Activated B cell treated with CpG ODN at 0.5 μM for 24 hours (primary cell): ENCODE measurements at regions of chr12 and their contacts with region 1.

Region 1: DNA sequence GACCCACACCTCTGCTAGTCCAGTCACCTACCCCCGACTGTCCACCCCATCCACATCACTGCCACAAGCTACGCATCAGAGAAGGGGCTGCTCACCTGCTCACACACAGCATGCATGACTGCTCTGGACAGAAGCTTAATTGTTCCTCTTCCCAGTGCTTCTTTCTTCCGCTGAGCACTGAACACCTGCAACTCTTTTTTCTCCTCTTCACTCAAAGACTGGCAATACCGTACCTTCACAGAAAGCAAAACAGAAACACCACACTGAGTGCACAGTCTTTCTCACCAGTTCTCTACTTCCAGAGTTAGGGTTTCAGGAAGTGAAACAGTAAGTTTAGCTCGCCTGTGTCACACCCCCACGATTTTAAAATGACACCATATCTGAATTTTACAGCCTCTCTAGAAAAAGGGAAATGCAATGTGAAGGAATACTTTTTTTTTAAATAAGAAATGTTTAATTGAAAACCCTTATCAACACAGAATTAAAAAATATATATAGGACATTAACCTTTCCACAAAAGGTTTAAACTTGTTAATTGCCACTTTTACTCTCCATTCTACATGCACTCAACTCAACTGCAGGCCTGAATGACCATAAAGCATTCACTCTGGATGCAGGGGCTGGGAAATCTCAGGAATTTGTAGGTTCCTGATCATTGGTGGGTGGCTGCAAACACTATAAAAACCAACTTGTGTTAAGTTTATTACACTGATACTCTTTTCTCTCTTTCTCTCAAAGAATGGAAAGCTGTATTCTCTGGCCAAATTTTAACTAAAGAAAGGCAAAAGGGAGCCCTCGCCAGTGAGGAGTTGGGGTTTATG is 120.0 kb downstream of the PRICKLE1 start:
- DNase-seq: peak; percentile 37
- ATAC-seq: peak; percentile 94
- H3K4me3 Mint-ChIP-seq: peak overlapping the region; percentile 87
- H3K27ac Mint-ChIP-seq: peak overlapping the region; percentile 97
- H3K4me1 Mint-ChIP-seq: peaks cover 76% of the 10 kb centered on the region
- H3K27me3 Mint-ChIP-seq: no peaks in the 10 kb centered on the region
- CTCF ChIP-seq: no peak

Region 2: GRCh38 chr12:42109031-42109430 is 360.5 kb before region 1 on chr12:
- CTCF ChIA-PET with region 1: no interaction called
- POLR2A ChIA-PET with region 1: no interaction called
- intact Hi-C with region 1: no loop called
- DNase-seq: no peak
- ATAC-seq: no peak
- H3K4me3 Mint-ChIP-seq: no peak overlapping the region
- H3K27ac Mint-ChIP-seq: no peak overlapping the region
- H3K4me1 Mint-ChIP-seq: peaks cover 5% of the 10 kb centered on the region
- H3K27me3 Mint-ChIP-seq: no peaks in the 10 kb centered on the region
- CTCF ChIP-seq: no peak

Region 3: DNA sequence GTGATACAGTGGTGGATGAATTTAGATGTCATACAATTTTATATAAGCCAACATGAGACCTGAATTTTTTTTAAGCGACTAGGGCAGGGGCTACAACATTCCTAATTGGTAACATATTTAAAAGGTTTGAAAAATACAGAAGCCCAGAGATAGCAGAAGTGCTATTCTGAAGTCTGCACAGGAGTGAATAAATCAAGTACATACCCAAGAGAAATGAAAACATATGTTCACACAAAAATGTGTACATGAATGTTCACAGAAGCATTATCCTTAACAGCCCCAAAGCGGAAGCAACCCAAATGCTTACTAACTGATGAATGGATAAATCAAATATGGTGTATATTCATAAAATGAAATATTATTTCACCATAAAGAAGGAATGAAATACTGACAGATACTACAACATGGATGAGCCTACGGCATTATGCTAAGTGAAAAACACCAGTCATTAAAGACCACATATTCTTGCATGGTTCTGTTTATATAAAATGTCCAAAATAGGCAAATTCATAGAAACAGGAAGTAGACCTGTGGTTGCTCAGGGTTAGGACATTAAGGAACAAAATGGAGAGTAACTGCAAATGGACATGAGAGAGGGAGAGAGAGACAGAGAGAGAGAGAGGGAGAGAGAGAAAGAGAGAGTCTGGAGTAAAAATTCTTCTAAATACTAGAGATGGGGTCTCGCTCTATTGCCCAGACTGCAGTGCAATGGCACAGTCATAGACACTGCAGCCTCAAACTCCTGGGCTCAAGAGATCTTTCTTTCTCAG is 296.9 kb before region 1 on chr12:
- CTCF ChIA-PET with region 1: no interaction called
- POLR2A ChIA-PET with region 1: no interaction called
- intact Hi-C with region 1: no loop called
- DNase-seq: no peak
- ATAC-seq: no peak
- H3K4me3 Mint-ChIP-seq: no peak overlapping the region
- H3K27ac Mint-ChIP-seq: peak overlapping the region; percentile 33
- H3K4me1 Mint-ChIP-seq: peaks cover 24% of the 10 kb centered on the region
- H3K27me3 Mint-ChIP-seq: no peaks in the 10 kb centered on the region
- CTCF ChIP-seq: no peak

Region 4: GRCh38 chr12:42325653-42326474 is 143.7 kb before region 1 on chr12 and contains the starts of genes PPHLN1 and ZCRB1:
- CTCF ChIA-PET with region 1: no interaction called
- POLR2A ChIA-PET with region 1: no interaction called
- intact Hi-C with region 1: loop called (anchors 1 kb)
- DNase-seq: peak; percentile 73
- ATAC-seq: peak; percentile 89
- H3K4me3 Mint-ChIP-seq: peak within 1 kb of the TSS; percentile 94
- H3K27ac Mint-ChIP-seq: peak within 1 kb of the TSS; percentile 90
- H3K4me1 Mint-ChIP-seq: peaks cover 51% of the 10 kb centered on the region
- H3K27me3 Mint-ChIP-seq: no peaks in the 10 kb centered on the region
- CTCF ChIP-seq: no peak
- total RNA-seq, gene PPHLN1: 94.0 and 95.9 TPM in 2 replicates
- total RNA-seq, gene ZCRB1: 37.4 and 37.6 TPM in 2 replicates

Region 5: DNA sequence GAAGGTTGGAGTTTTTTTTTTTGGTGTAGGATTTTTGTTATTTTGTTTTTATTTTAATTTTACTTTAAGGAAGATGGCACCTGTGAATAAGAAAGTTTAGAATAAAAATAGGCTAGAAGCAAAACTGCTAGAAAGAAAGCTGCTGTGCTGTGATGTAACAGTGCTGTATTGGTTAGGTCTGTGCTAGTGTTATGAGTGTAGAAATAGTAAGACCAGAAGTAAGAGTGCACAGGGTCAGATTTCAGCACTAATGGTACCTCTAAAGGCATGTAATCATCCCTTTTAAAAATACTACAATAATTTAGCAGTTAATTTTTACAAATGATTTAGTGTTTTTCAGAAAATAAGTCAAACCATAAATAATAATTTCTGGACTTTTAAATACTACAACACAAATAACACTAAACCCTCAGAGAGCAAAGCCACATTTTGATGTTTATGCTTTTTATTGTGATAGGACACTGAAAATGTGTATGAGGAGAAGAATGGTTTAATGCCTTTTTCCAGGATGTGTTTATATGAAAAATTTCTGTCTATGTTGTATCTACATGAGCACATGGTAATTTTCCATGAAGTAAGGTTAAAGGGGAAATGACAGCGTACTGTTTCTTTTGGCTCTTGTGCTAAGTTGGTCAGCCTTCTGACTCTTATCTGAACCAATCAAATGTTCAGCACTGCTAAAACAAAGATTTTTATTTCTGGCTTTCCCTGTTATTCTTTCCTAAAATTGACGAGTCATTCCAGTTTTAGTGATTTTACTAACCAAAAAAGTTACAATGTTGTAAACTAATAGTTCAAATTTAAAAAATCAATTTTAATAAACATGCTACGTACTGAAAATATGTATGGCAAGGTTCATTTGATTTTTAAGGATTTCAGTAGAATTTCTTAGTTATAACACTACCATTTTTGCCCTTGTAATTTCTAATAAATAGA is 47.5 kb before region 1 on chr12:
- CTCF ChIA-PET with region 1: no interaction called
- POLR2A ChIA-PET with region 1: no interaction called
- intact Hi-C with region 1: loop called (anchors 1 kb)
- DNase-seq: no peak
- ATAC-seq: no peak
- H3K4me3 Mint-ChIP-seq: no peak overlapping the region
- H3K27ac Mint-ChIP-seq: no peak overlapping the region
- H3K4me1 Mint-ChIP-seq: peaks cover 27% of the 10 kb centered on the region
- H3K27me3 Mint-ChIP-seq: no peaks in the 10 kb centered on the region
- CTCF ChIP-seq: no peak

Region 6: GRCh38 chr12:42458575-42458974 is 11.0 kb before region 1 on chr12:
- CTCF ChIA-PET with region 1: no interaction called
- POLR2A ChIA-PET with region 1: interaction called, 3 read pairs
- intact Hi-C with region 1: loop called (anchors 1 kb)
- DNase-seq: no peak
- ATAC-seq: no peak
- H3K4me3 Mint-ChIP-seq: no peak overlapping the region
- H3K27ac Mint-ChIP-seq: peak overlapping the region; percentile 11
- H3K4me1 Mint-ChIP-seq: peaks cover 27% of the 10 kb centered on the region
- H3K27me3 Mint-ChIP-seq: no peaks in the 10 kb centered on the region
- CTCF ChIP-seq: no peak